Right lobe of liver (tissue), 6 donors: ENCODE measurements at regions of chr3 and their contacts with region 1.

Region 1: DNA sequence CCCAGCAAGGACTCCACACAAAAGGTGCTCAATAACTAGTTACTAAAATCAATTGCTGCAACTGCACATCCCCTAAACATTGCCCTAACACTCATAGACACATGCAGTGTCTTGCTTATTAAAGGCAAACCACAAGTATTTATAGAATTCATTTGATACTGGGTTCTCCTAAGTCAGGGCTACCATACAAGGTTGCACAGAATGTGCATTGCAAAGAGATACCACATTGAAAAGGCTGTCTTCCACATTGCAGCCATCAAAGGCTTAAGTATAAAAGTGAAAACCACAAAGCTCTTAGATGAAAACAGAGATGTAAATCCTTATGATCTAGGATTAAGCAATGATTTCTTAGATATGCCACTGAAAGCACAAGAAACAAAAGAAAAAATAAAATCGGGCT is 33.6 kb upstream of the TOPAZ1 start:
- DNase-seq: no peak
- ATAC-seq: no peak
- H3K4me3 ChIP-seq: no peak overlapping the region
- H3K27ac ChIP-seq: no peak overlapping the region
- H3K4me1 ChIP-seq: no peaks in the 10 kb centered on the region
- H3K27me3 ChIP-seq: no peaks in the 10 kb centered on the region
- CTCF ChIP-seq: no peak
- POLR2A ChIP-seq: no peak

Region 2: DNA sequence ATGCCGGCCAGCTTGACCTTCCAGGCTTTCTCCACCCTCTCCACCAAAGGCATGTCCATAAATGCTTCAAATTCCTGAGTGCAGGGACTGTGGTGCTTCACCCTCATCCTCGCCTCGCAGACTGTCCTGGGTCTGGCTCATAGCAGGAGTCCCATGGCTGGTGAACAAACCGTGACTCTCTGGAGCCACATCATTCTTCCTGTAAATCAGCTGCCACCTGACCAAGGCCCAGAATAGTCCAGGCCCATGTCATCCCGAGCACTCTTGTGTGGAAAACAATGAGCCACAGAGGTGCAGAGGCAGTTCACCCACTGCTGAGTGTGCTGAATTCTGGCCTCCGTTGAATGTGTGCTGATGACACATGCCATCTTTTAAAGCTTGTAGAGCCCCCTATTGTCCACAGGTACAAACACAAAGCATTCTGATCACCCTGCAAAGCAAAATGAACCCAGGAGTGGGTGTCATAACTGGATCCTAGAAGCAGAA is 448.7 kb before region 1 on chr3:
- intact Hi-C with region 1: loop called in 1 of 2 experiments (anchors 10 kb)
- DNase-seq: no peak
- ATAC-seq: peak; percentile 61 to 80 (median 65)
- H3K4me3 ChIP-seq: no peak overlapping the region
- H3K27ac ChIP-seq: no peak overlapping the region
- H3K4me1 ChIP-seq: no peaks in the 10 kb centered on the region
- H3K27me3 ChIP-seq: no peaks in the 10 kb centered on the region
- CTCF ChIP-seq: peak in 1 of 4 donors; percentile 29
- POLR2A ChIP-seq: no peak

Region 3: DNA sequence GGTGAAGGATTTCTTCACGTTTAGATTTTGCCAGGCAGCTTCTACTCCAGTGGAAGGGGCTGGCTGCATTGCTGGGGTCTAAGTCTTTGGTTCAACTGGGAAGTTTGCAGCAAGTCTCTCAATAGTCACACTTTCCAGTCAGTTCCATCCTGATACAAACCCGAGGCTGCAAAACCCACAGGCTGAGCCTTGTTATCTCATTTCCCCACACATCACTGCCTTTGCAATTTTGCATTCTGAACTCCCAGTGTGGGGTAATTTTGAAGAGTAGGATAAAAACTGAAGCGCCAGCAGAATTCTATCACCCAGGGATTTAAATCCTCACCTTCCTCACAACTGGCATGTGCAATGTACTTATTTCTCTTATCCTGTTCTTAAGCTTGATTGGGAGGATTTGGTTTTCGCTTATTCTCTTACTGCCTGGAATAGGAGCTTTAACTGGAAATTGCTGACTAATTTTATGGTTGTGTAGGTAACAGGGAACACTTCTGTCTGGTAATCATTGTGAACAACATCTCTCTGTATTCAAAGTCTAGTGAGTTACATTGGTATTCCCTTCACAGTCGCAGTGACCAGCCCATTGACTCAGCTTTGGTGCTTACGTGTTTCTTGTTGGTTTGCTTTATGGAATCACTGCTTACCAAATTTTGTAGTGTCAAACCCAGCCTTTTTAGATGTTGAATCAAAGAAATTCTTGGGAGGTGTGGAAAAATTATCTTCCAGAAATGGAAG is 108.4 kb before region 1 on chr3:
- intact Hi-C with region 1: no loop called
- DNase-seq: no peak
- ATAC-seq: no peak
- H3K4me3 ChIP-seq: no peak overlapping the region
- H3K27ac ChIP-seq: no peak overlapping the region
- H3K4me1 ChIP-seq: no peaks in the 10 kb centered on the region
- H3K27me3 ChIP-seq: no peaks in the 10 kb centered on the region
- CTCF ChIP-seq: no peak
- POLR2A ChIP-seq: no peak

Region 4: GRCh38 chr3:44323341-44323955 is 115.4 kb after region 1 on chr3:
- intact Hi-C with region 1: no loop called
- DNase-seq: peak; percentile 54 to 74 (median 56)
- ATAC-seq: peak; percentile 84 to 89 (median 86)
- H3K4me3 ChIP-seq: no peak overlapping the region
- H3K27ac ChIP-seq: no peak overlapping the region
- H3K4me1 ChIP-seq: peaks cover 0 to 20% (median 2%) of the 10 kb centered on the region in 4 donors
- H3K27me3 ChIP-seq: no peaks in the 10 kb centered on the region
- CTCF ChIP-seq: peak; percentile 76 to 85 (median 82)
- POLR2A ChIP-seq: no peak